Dorsolateral prefrontal cortex (tissue), 120 donors: ENCODE measurements at regions of chr2 and their contacts with region 1.

Region 1: GRCh38 chr2:61928826-61929461 is 23.5 kb downstream of the COMMD1 start:
- DNase-seq: no peak
- H3K4me3 ChIP-seq: no peak overlapping the region
- H3K27ac ChIP-seq: no peak overlapping the region
- H3K27me3 ChIP-seq: no peaks in the 10 kb centered on the region
- CTCF ChIP-seq: no peak

Region 2: DNA sequence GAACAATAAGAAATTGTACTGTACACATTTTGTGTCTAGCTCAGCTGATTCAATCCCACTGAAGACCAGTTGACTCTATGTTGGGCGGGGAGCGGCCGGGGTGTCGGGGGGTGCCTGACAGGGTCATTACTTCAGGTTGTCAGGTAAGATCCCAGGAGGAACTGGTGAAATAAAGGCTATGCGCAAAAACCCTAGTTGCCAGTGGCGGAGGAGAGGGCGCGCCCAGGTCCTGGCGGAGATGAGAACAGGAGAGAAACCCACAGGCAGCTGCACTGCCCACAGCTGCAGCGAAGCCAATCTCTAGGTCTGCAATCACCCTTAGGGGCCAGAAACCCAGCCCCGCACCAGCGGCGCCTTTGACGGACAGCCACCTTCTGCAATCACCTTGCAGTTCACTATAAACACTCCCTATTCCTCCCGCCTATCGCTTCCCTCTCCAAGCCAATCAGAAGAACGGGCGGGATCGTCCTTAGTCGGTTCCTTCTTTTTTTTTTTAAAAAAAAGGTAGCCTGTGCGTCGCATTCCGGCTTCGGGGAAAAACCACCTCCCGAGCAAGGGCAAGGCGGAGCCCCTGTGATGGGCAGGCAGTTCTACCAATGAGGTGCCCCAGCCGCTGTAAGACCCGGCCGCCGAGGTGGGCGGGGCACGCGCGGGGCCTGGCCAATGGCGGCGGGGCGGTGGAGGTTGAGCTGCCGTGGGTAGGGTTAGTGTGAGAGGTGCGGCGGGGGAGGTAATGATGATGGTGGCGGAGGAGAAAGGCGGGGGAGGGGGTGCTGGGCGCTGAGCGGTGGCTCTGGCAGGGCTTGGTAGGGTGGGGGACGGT is 776.3 kb after region 1 on chr2 and contains the start of gene EHBP1:
- intact Hi-C with region 1: loop called in 1 of 2 experiments (anchors 10 kb)
- DNase-seq: peak; percentile 97 to 100 (median 99)
- H3K4me3 ChIP-seq: peak within 1 kb of the TSS; percentile 57 to 95 (median 82)
- H3K27ac ChIP-seq: peak within 1 kb of the TSS; percentile 39 to 95 (median 88)
- H3K27me3 ChIP-seq: no peaks in the 10 kb centered on the region
- CTCF ChIP-seq: peak in 3 of 56 donors; percentile 9 to 29 (median 9)
- total RNA-seq, gene EHBP1: 66.5 to 148 (median 107) TPM